Left ventricle myocardium inferior (tissue), 1 donor: ENCODE measurements at regions of chr11 and their contacts with region 1.

Region 1: DNA sequence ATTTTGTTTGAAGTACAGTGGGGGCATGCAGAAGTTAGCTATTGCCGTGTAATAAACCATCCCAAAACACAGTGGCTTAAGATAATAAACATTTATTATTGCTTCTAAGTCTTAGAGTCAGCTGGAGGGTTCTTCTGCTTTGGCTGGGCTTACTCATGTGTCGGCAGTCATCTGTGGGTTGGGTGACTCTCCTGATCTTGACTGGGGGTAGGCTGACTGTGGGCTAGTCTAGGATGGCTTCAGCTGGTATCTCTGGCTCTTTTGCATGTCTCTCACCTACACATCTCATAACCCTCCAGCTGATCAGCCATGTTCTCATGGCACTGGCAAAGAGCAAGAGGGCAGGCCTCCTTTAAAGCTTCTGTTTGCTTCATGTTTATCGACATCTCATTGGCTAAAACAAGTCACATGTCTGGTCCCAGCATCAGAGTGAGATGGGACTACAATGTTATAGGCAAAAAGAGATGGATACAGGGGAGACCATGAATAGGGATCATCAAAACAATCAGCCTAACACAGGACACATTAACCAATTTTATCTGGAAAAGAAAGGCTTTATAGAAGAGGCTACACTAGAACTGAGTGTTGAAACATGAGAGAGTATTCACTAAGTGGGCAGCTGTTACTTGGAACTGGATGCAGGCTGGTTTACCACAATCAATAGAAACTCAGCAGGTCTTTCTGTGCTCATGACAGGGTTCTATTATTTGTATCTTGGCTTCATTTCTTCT is 5.1 kb downstream of the LRRC51 start:
- DNase-seq: no peak
- H3K4me3 ChIP-seq: no peak overlapping the region
- H3K27ac ChIP-seq: no peak overlapping the region
- H3K4me1 ChIP-seq: peaks cover 10% of the 10 kb centered on the region
- H3K27me3 ChIP-seq: no peaks in the 10 kb centered on the region
- CTCF ChIP-seq: no peak

Region 2: GRCh38 chr11:71977743-71978418 is 107.9 kb before region 1 on chr11:
- intact Hi-C with region 1: loop called (anchors 5 kb)
- DNase-seq: no peak
- H3K4me3 ChIP-seq: no peak overlapping the region
- H3K27ac ChIP-seq: no peak overlapping the region
- H3K4me1 ChIP-seq: no peaks in the 10 kb centered on the region
- H3K27me3 ChIP-seq: no peaks in the 10 kb centered on the region
- CTCF ChIP-seq: peak; percentile 78

Region 3: GRCh38 chr11:72058416-72059034 is 27.3 kb before region 1 on chr11:
- intact Hi-C with region 1: no loop called
- DNase-seq: no peak
- H3K4me3 ChIP-seq: no peak overlapping the region
- H3K27ac ChIP-seq: no peak overlapping the region
- H3K4me1 ChIP-seq: peaks cover 10% of the 10 kb centered on the region
- H3K27me3 ChIP-seq: no peaks in the 10 kb centered on the region
- CTCF ChIP-seq: no peak